ENCODE measurements at regions of chr11 and their contacts with region 1.

Region 1: GRCh38 chr11:288328-289144 is at the start of gene PGGHG:
- DNase-seq: peak; percentile 55 to 71 (median 67)
- H3K4me3 ChIP-seq: peak within 1 kb of the TSS; percentile 74
- H3K4me3 Mint-ChIP-seq: peak within 1 kb of the TSS; percentile 94 to 99 (median 98)
- H3K27ac ChIP-seq: peak within 1 kb of the TSS; percentile 79
- H3K27ac Mint-ChIP-seq: peak within 1 kb of the TSS; percentile 93 to 99 (median 97)
- H3K4me1 ChIP-seq: peaks cover 27% of the 10 kb centered on the region
- H3K4me1 Mint-ChIP-seq: peaks cover 29 to 59% (median 35%) of the 10 kb centered on the region in 3 donors
- H3K27me3 ChIP-seq: no peaks in the 10 kb centered on the region
- H3K27me3 Mint-ChIP-seq: peaks cover 0 to 9% of the 10 kb centered on the region in 2 donors
- total RNA-seq, gene PGGHG: 81.0 to 81.2 TPM

Region 2: GRCh38 chr11:269146-269890 is 19.2 kb before region 1 on chr11:
- CTCF ChIA-PET with region 1: interaction called, 49 read pairs
- POLR2A ChIA-PET with region 1: interaction called, 62 read pairs
- DNase-seq: peak; percentile 24 to 88 (median 72)
- H3K4me3 ChIP-seq: peak overlapping the region; percentile 49
- H3K4me3 Mint-ChIP-seq: peak overlapping the region; percentile 84 to 94 (median 90)
- H3K27ac ChIP-seq: peak overlapping the region; percentile 78
- H3K27ac Mint-ChIP-seq: peak overlapping the region; percentile 89 to 100 (median 96)
- H3K4me1 ChIP-seq: peaks cover 22% of the 10 kb centered on the region
- H3K4me1 Mint-ChIP-seq: peaks cover 30 to 43% (median 31%) of the 10 kb centered on the region in 3 donors
- H3K27me3 ChIP-seq: no peaks in the 10 kb centered on the region
- H3K27me3 Mint-ChIP-seq: peaks cover 0 to 2% of the 10 kb centered on the region in 2 donors

Region 3: GRCh38 chr11:324156-324555 is 35.6 kb after region 1 on chr11:
- CTCF ChIA-PET with region 1: no interaction called
- POLR2A ChIA-PET with region 1: no interaction called
- DNase-seq: no peak
- H3K4me3 ChIP-seq: no peak overlapping the region
- H3K4me3 Mint-ChIP-seq: peak overlapping the region in 1 of 7 donors; percentile 43
- H3K27ac ChIP-seq: peak overlapping the region; percentile 55
- H3K27ac Mint-ChIP-seq: peak overlapping the region in 1 of 8 donors; percentile 79
- H3K4me1 ChIP-seq: peaks cover 38% of the 10 kb centered on the region
- H3K4me1 Mint-ChIP-seq: peaks cover 43 to 63% (median 52%) of the 10 kb centered on the region in 3 donors
- H3K27me3 ChIP-seq: no peaks in the 10 kb centered on the region
- H3K27me3 Mint-ChIP-seq: no peaks in the 10 kb centered on the region